ENCODE measurements at regions of chr3 and their contacts with region 1.

Region 1: DNA sequence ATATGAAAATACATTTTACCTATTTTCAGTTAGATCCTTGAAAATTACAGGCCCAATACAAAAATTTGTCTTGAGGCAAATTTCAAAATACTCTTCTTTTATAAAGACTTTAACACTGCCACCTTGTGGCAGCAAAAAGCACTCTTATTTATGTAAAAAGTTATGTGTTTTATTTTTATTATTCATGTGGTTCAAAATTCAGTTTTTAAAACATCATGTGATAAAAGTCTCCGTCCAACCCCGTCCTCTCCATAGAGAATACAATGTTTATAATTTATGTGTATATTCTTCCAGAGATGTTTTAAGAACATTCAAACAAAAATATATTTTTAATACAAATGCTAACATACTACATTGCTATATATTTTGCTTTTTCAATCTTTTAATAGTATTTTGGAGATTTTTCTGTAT is 36.9 kb upstream of the TRIM59 start:
- DNase-seq: no peak
- ATAC-seq: no peak
- H3K4me3 Mint-ChIP-seq: no peak overlapping the region
- H3K27ac Mint-ChIP-seq: no peak overlapping the region
- H3K4me1 Mint-ChIP-seq: peaks cover 3% of the 10 kb centered on the region
- H3K27me3 Mint-ChIP-seq: peaks cover 6% of the 10 kb centered on the region

Region 2: DNA sequence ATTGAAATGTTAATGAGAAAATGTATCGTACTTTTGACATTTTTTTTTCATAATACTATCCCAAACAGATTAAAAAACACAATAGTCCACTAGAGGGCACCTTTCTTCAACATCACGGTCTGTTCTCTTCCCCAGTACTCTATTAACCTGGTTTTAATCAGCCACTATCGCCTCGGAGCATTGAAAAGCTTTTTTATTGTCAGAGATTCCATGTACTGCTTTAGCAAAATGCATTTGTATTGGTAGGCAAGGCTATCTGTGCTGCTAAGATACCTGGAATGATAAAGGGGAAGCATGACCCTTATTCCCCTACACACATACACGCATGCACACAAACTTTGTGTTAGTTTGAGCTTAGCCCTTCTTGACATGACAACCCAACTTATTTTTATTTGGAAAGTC is 657.9 kb before region 1 on chr3:
- CTCF ChIA-PET with region 1: no interaction called
- POLR2A ChIA-PET with region 1: no interaction called
- intact Hi-C with region 1: loop called in 1 of 2 experiments (anchors 5 kb)
- DNase-seq: no peak
- ATAC-seq: no peak
- H3K4me3 Mint-ChIP-seq: no peak overlapping the region
- H3K27ac Mint-ChIP-seq: no peak overlapping the region
- H3K4me1 Mint-ChIP-seq: no peaks in the 10 kb centered on the region
- H3K27me3 Mint-ChIP-seq: peaks cover 1% of the 10 kb centered on the region

Region 3: DNA sequence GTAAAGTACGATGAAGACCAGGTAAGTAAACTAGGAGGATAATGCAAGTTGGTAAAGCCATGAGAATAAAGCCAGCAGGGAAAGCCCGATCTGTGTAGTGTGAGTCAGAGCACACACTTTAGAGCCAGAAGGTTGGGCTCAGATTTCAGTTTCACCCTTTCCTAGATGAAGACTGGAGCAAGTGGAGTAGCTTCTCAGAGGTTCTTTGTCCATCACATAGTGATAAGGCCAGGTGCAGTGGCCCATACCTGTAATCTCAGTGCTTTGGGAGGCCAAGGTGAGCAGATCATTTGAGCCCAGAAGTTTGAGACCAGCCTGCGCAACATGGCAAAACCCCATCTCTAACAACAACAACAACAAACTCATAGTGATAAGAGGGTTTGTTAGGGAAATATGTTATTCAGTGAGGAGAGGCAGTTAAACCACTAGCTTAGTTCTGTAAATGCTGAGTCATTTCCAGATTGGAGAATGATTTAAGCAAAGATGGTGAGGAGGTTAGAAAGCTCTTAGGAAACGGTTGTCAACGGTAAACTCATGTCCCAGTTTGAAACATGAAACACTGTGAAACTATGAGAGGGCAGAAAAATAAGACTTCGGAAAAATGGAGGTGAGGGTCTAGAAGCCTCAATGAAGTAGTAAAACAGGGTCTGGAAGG is 458.8 kb before region 1 on chr3:
- CTCF ChIA-PET with region 1: no interaction called
- POLR2A ChIA-PET with region 1: no interaction called
- intact Hi-C with region 1: loop called (anchors 1 to 5 kb)
- DNase-seq: peak; percentile 40
- ATAC-seq: peak; percentile 92
- H3K4me3 Mint-ChIP-seq: no peak overlapping the region
- H3K27ac Mint-ChIP-seq: peak overlapping the region; percentile 73
- H3K4me1 Mint-ChIP-seq: peaks cover 15% of the 10 kb centered on the region
- H3K27me3 Mint-ChIP-seq: no peaks in the 10 kb centered on the region

Region 4: GRCh38 chr3:160225176-160226025 is 261.1 kb before region 1 on chr3 and contains the start of gene C3orf80:
- CTCF ChIA-PET with region 1: no interaction called
- POLR2A ChIA-PET with region 1: no interaction called
- intact Hi-C with region 1: loop called in 1 of 2 experiments (anchors 10 kb)
- DNase-seq: peak; percentile 76
- ATAC-seq: peak; percentile 91
- H3K4me3 Mint-ChIP-seq: peak within 1 kb of the TSS; percentile 62
- H3K27ac Mint-ChIP-seq: no peak within 1 kb of the TSS
- H3K4me1 Mint-ChIP-seq: peaks cover 10% of the 10 kb centered on the region
- H3K27me3 Mint-ChIP-seq: peaks cover 41% of the 10 kb centered on the region
- total RNA-seq, gene C3orf80: 0.09 TPM in 1 of 2 experiments, not detected in the other

Region 5: GRCh38 chr3:160449636-160450598 is 36.5 kb before region 1 on chr3 and contains the start of gene TRIM59:
- CTCF ChIA-PET with region 1: no interaction called
- POLR2A ChIA-PET with region 1: no interaction called
- intact Hi-C with region 1: loop called (anchors 2 kb)
- DNase-seq: peak; percentile 99
- ATAC-seq: peak; percentile 95
- H3K4me3 Mint-ChIP-seq: peak within 1 kb of the TSS; percentile 97
- H3K27ac Mint-ChIP-seq: peak within 1 kb of the TSS; percentile 96
- H3K4me1 Mint-ChIP-seq: peaks cover 20% of the 10 kb centered on the region
- H3K27me3 Mint-ChIP-seq: no peaks in the 10 kb centered on the region
- total RNA-seq, gene TRIM59: 32.5 to 42.2 TPM

Measured in activated CD4-positive, alpha-beta T cell treated with anti-CD3 and anti-CD28 coated beads for 36 hours (primary cell).